Aorta (tissue), 5 donors: ENCODE measurements at regions of chr14 and their contacts with region 1.

Region 1: GRCh38 chr14:91323671-91324605 is 79.4 kb upstream of the GPR68 start:
- DNase-seq: peak; percentile 91 to 95
- ATAC-seq: peak; percentile 86
- H3K4me3 ChIP-seq: no peak overlapping the region
- H3K27ac ChIP-seq: no peak overlapping the region
- H3K4me1 ChIP-seq: no peaks in the 10 kb centered on the region
- H3K27me3 ChIP-seq: no peaks in the 10 kb centered on the region

Region 2: DNA sequence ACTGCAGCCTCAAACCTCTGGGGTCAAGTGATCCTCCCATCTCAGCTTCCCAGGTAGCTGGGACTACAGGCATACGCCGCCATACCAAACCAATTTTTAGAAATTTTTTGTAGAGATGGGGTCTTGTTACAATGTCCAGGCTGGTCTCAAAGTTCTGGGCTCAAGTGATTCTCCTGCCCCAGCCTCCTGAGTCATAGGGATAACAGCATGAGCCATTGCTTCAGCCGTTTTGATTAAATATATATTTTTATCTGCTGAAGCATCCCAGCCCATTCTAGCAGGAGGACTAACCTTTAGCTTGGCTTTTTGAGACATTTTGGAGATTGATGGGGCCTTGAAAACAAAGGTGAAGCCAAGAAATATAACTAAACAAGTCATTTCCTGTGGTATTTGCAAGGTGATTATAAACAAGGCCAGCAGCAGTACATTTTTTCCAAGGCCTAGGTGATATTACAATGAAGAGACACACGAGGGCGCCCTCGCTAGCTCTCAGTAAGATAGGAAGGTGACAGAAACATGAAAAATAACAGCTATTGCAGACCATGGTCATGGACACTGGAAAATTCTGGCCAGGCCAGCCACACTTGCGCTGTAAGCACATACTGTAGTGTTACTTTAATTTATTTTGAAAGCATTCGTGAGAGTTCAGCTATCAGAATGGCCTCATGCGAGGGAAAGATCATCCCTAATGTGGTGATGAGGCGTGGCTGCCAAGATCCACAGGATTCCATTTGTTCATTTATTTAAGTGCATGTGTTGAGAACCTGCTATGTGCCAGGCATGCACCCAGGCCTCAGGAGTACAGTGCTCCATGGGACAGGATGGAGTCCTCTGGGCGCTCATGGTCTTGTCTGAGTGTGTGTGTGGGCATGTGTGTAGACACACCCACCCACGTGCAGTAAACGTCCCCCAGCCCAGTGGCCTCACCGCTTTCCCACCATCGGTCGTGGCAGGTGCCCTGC is 146.6 kb before region 1 on chr14:
- intact Hi-C with region 1: no loop called
- DNase-seq: peak; percentile 56 to 73
- ATAC-seq: peak; percentile 71
- H3K4me3 ChIP-seq: no peak overlapping the region
- H3K27ac ChIP-seq: no peak overlapping the region
- H3K4me1 ChIP-seq: no peaks in the 10 kb centered on the region
- H3K27me3 ChIP-seq: no peaks in the 10 kb centered on the region

Region 3: DNA sequence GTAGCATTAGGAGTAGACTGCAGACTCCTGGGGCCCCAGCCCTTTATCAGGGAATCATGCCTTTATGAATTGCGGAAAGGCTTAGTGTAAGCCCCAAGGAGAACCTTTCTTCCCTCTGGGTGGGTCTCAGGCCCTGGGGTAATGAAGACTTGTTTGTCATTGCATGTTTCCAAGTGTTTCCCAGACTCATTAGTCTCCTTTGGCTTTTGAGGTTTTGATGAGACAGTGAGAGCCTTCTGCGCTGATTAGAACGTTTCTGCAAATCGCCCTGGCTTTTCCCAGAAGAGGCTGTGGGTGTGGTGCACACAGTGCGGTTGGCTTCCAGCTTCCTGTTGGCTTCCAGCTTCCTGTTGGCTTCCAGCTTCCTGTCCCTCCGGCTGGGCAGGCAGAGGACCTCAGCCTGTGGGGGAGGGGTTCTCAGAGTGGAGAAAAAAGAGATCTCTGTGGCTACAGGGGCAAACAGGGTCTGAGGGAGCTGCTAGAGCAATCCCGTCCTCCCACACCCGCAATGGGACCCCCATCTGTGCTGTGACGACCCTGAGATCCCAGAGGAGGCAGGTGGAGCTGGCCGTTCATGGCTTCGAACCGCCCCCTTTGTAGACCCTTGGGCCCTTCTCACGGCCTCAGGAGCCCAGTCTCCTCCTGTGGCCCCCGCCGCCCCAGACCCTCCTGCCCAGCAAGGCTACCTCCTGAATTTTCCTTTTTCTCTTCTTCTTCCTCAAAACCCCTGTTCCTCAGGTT is 121.5 kb before region 1 on chr14:
- intact Hi-C with region 1: no loop called
- DNase-seq: peak; percentile 8 to 72
- ATAC-seq: peak; percentile 48
- H3K4me3 ChIP-seq: no peak overlapping the region
- H3K27ac ChIP-seq: no peak overlapping the region
- H3K4me1 ChIP-seq: no peaks in the 10 kb centered on the region
- H3K27me3 ChIP-seq: no peaks in the 10 kb centered on the region

Region 4: GRCh38 chr14:91418387-91419043 is 94.6 kb after region 1 on chr14:
- intact Hi-C with region 1: loop called (anchors 2 kb)
- DNase-seq: peak; percentile 61 to 90
- ATAC-seq: peak; percentile 89
- H3K4me3 ChIP-seq: no peak overlapping the region
- H3K27ac ChIP-seq: no peak overlapping the region
- H3K4me1 ChIP-seq: no peaks in the 10 kb centered on the region
- H3K27me3 ChIP-seq: no peaks in the 10 kb centered on the region